Thyroid gland (tissue), 4 donors: ENCODE measurements at regions of chr4 and their contacts with region 1.

Region 1: GRCh38 chr4:80322716-80323115 is 12.8 kb upstream of the CFAP299 start:
- DNase-seq: peak; percentile 48 to 70
- H3K4me3 ChIP-seq: no peak overlapping the region
- H3K27ac ChIP-seq: no peak overlapping the region
- H3K4me1 ChIP-seq: peaks cover 0 to 13% of the 10 kb centered on the region in 2 donors
- H3K27me3 ChIP-seq: no peaks in the 10 kb centered on the region
- CTCF ChIP-seq: peak in 4 of 6 experiments; percentile 18 to 46 (median 25)
- POLR2A ChIP-seq: no peak

Region 2: DNA sequence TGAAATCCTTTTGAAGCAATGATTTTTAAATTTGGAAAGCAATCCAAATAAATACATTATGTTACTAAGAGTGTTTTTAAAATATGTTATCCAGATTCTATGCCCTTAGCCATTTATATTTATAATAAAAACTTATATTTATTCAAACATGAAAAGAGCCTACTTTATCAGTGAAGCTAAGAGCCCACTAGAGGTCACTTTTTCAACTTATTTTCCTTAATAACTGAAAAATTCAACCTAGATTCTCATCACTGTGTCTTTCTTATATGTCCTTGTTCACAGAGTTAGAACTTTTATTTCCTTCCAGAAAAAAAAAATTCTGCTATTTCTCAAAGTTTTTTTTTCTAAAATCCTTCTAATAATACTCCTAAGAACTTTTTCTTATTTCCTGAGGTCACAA is 101.6 kb before region 1 on chr4:
- intact Hi-C with region 1: loop called (anchors 10 kb)
- DNase-seq: no peak
- H3K4me3 ChIP-seq: no peak overlapping the region
- H3K27ac ChIP-seq: no peak overlapping the region
- H3K4me1 ChIP-seq: no peaks in the 10 kb centered on the region
- H3K27me3 ChIP-seq: peaks cover 7% of the 10 kb centered on the region
- CTCF ChIP-seq: peak in 3 of 6 experiments; percentile 17 to 35 (median 21)
- POLR2A ChIP-seq: no peak

Region 3: GRCh38 chr4:80610845-80611677 is 288.3 kb after region 1 on chr4:
- intact Hi-C with region 1: no loop called
- DNase-seq: no peak
- H3K4me3 ChIP-seq: no peak overlapping the region
- H3K27ac ChIP-seq: no peak overlapping the region
- H3K4me1 ChIP-seq: no peaks in the 10 kb centered on the region
- H3K27me3 ChIP-seq: no peaks in the 10 kb centered on the region
- CTCF ChIP-seq: no peak
- POLR2A ChIP-seq: no peak

Region 4: GRCh38 chr4:80709082-80709869 is 386.6 kb after region 1 on chr4:
- intact Hi-C with region 1: no loop called
- DNase-seq: no peak
- H3K4me3 ChIP-seq: no peak overlapping the region
- H3K27ac ChIP-seq: no peak overlapping the region
- H3K4me1 ChIP-seq: no peaks in the 10 kb centered on the region
- H3K27me3 ChIP-seq: no peaks in the 10 kb centered on the region
- CTCF ChIP-seq: no peak
- POLR2A ChIP-seq: no peak